Heart right ventricle (tissue), 16 donors: ENCODE measurements at regions of chr11 and their contacts with region 1.

Region 1: DNA sequence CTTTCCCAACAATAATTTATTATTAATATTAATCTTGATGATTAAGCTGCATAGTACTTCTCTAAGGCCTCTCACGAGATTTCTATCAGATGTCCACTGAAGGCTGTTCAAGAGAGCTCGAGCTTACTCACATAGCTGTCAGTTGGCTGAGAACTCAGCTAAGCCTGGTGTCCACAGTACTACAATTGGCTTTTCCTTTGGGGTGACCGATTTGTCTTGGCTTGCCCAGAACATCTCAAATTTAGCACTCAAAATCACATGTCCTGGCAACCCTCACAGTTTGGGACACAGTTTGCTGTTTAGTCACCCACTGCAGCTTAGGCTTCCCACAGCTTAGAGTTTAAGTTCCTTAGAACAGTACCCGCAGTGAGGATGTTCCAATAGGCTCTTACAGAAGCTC is 96.5 kb downstream of the LUZP2 start:
- DNase-seq: no peak
- ATAC-seq: peak in 1 of 8 donors; percentile 18
- H3K4me3 ChIP-seq: no peak overlapping the region
- H3K27ac ChIP-seq: no peak overlapping the region
- H3K4me1 ChIP-seq: no peaks in the 10 kb centered on the region
- H3K27me3 ChIP-seq: no peaks in the 10 kb centered on the region
- CTCF ChIP-seq: no peak

Region 2: DNA sequence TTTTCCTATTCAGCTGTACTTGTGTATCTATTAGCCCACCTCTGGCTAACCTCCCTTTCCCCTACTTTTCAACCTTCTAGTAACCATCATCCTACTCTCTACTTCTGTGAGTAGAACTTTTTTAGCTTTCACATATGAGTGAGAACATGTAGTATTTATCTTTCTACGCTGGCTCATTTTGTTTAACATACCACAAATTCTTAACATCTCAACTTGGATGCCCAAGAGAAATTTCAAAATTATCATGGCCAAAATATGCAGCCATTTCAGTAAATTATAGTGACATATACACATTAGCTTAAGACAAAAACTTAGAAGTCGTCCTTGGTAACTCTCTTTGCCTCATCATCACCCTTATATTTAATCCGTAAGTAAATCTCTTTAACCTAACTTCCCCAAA is 61.8 kb before region 1 on chr11:
- intact Hi-C with region 1: loop called in 1 of 10 experiments (anchors 10 kb)
- DNase-seq: no peak
- ATAC-seq: no peak
- H3K4me3 ChIP-seq: no peak overlapping the region
- H3K27ac ChIP-seq: no peak overlapping the region
- H3K4me1 ChIP-seq: no peaks in the 10 kb centered on the region
- H3K27me3 ChIP-seq: no peaks in the 10 kb centered on the region
- CTCF ChIP-seq: no peak

Region 3: GRCh38 chr11:24623121-24623520 is 29.8 kb after region 1 on chr11:
- intact Hi-C with region 1: no loop called
- DNase-seq: no peak
- ATAC-seq: no peak
- H3K4me3 ChIP-seq: no peak overlapping the region
- H3K27ac ChIP-seq: no peak overlapping the region
- H3K4me1 ChIP-seq: no peaks in the 10 kb centered on the region
- H3K27me3 ChIP-seq: no peaks in the 10 kb centered on the region
- CTCF ChIP-seq: no peak